ENCODE measurements at regions of chr3 and their contacts with region 1.

Region 1: DNA sequence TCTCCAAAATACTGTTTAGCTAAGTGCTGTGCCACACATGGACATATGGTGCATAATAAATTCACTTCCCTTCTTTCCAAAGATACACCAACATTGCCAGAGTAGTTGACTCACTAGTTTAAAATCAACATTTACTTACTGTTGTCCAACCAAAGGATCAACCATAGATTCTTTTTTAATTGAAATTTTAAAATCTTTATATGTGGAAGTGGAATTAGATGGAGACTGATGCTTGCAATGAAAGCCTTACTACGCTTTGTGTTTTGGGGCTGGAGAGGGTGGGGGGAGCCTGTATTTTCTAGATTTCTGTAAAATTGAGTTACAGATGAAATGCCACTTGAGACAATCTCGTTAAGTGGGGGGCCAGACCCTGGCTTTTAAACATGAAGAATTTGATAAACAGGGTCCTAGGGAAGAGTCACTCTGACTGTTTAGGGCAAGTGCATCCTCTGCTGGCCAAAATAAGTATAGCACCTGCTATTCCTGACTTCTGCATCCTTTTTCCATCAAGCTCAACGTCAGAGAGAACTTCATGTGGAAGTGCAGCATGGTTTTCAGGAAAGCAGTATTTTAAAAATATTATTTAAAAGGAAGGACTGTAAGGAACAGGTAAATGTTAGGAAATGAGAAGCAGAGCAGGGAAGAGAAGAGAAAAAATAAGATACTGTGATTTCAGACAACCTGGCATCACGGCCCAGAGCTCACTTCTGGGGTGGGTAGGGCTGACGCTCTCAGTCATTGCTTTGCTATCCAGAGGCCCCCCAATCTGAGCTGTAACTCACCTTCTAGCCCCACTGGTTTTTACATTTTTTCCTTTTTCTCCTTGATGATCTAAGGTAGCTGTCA is 76.7 kb downstream of the BOC start:
- DNase-seq: peak; percentile 75
- H3K4me3 ChIP-seq: no peak overlapping the region
- H3K27ac ChIP-seq: no peak overlapping the region
- H3K4me1 ChIP-seq: peaks cover 8% of the 10 kb centered on the region
- H3K27me3 ChIP-seq: no peaks in the 10 kb centered on the region
- CTCF ChIP-seq: peak; percentile 89 to 95
- POLR2A ChIP-seq: no peak

Region 2: GRCh38 chr3:113035387-113035982 is 252.5 kb before region 1 on chr3:
- CTCF ChIA-PET with region 1: interaction called, 14 read pairs
- POLR2A ChIA-PET with region 1: no interaction called
- dilution Hi-C with region 1: no loop called
- intact Hi-C with region 1: no loop called
- DNase-seq: peak; percentile 47
- H3K4me3 ChIP-seq: no peak overlapping the region
- H3K27ac ChIP-seq: no peak overlapping the region
- H3K4me1 ChIP-seq: no peaks in the 10 kb centered on the region
- H3K27me3 ChIP-seq: no peaks in the 10 kb centered on the region
- CTCF ChIP-seq: peak; percentile 73 to 83
- POLR2A ChIP-seq: no peak

Region 3: DNA sequence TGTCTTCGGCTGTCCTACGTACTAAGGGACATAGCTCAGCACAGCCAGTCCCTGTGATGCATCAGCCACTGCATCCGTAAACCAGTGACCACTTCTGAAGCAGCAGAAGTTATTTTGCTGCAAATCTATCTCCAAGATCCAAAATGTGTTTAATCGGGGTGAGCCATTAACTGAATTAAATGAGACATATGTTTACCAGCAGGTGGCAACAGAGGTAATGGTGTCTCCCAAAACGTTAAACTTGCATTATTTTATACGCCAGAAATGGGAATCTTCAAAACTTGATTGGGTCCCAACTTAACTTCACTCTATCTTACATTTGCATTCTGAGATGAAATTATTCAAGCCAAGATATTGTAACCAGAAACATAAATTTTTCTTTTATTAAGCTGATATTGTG is 152.0 kb before region 1 on chr3:
- CTCF ChIA-PET with region 1: interaction called, 90 read pairs
- POLR2A ChIA-PET with region 1: no interaction called
- dilution Hi-C with region 1: no loop called
- intact Hi-C with region 1: loop called (anchors 1 kb)
- DNase-seq: peak; percentile 20
- H3K4me3 ChIP-seq: no peak overlapping the region
- H3K27ac ChIP-seq: no peak overlapping the region
- H3K4me1 ChIP-seq: no peaks in the 10 kb centered on the region
- H3K27me3 ChIP-seq: no peaks in the 10 kb centered on the region
- CTCF ChIP-seq: peak; percentile 27 to 30
- POLR2A ChIP-seq: no peak

Region 4: GRCh38 chr3:113211330-113212149 is 76.5 kb before region 1 on chr3 and contains the start of gene BOC:
- CTCF ChIA-PET with region 1: interaction called, 9 read pairs
- POLR2A ChIA-PET with region 1: no interaction called
- dilution Hi-C with region 1: no loop called
- intact Hi-C with region 1: loop called (anchors 5 kb)
- DNase-seq: peak; percentile 10
- H3K4me3 ChIP-seq: peak within 1 kb of the TSS; percentile 53 to 59 (median 53)
- H3K27ac ChIP-seq: no peak within 1 kb of the TSS
- H3K4me1 ChIP-seq: no peaks in the 10 kb centered on the region
- H3K27me3 ChIP-seq: peaks cover 30 to 53% of the 10 kb centered on the region in 2 experiments
- CTCF ChIP-seq: no peak
- POLR2A ChIP-seq: no peak
- total RNA-seq, gene BOC: not detected in 2 replicates

Region 5: GRCh38 chr3:113275929-113276750 is 11.9 kb before region 1 on chr3:
- CTCF ChIA-PET with region 1: interaction called, 26 read pairs
- POLR2A ChIA-PET with region 1: no interaction called
- dilution Hi-C with region 1: no loop called
- intact Hi-C with region 1: no loop called
- DNase-seq: peak; percentile 2
- H3K4me3 ChIP-seq: no peak overlapping the region
- H3K27ac ChIP-seq: peak overlapping the region; percentile 23
- H3K4me1 ChIP-seq: peaks cover 5% of the 10 kb centered on the region
- H3K27me3 ChIP-seq: peaks cover 0 to 3% of the 10 kb centered on the region in 2 experiments
- CTCF ChIP-seq: no peak
- POLR2A ChIP-seq: no peak

Region 6: GRCh38 chr3:113441051-113441770 is 153.2 kb after region 1 on chr3 and contains the start of gene CFAP44:
- CTCF ChIA-PET with region 1: no interaction called
- POLR2A ChIA-PET with region 1: no interaction called
- dilution Hi-C with region 1: no loop called
- intact Hi-C with region 1: no loop called
- DNase-seq: peak; percentile 61
- H3K4me3 ChIP-seq: peak within 1 kb of the TSS; percentile 20 to 57 (median 27)
- H3K27ac ChIP-seq: no peak within 1 kb of the TSS
- H3K4me1 ChIP-seq: peaks cover 7% of the 10 kb centered on the region
- H3K27me3 ChIP-seq: no peaks in the 10 kb centered on the region
- CTCF ChIP-seq: no peak
- POLR2A ChIP-seq: no peak
- total RNA-seq, gene CFAP44: 3.3 and 4.7 TPM in 2 replicates